PC-9 (cell line): ENCODE measurements at regions of chr11 and their contacts with region 1.

Region 1: DNA sequence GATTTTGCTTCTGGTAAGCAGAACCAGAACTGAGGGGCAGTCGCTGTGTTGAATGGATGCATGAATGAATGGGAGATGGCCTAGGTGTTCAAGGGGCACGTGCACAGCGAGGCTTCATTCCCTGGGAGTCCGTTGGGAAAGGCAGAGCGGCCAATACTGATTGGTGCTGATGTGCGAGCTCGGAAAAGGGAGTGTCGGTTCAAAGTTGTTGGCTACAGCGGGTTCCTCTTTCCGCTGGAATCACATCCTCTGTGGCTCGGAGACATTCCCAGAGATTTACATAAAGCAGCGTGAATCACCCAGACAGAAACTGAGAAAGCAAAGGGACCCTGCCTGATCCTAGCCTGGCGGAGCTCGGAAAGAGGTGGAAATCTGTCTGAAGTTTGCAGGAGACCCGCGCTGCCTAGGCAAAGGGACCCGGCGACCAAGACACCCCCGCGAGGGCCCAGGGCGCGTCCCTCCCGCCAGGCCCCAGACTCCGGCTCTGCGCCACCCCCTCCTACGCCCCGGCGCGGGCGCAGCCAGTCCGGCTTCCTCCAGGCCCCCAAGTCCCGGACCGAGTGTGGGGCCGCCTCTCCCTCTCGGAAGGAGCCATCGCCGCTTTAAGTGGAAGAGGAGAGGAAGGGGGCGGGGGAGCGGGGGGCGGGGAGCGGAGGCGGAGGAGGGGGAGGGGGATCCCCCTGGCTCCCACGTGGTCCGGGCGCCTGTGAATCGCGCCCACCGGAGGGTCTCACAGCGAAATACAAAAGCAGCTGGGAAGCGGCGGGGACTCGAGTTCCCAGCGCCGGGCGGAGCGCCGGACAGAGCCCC is at the start of gene FJX1:
- DNase-seq: peak; percentile 42 to 74
- H3K4me3 ChIP-seq: peak within 1 kb of the TSS; percentile 66
- H3K27ac ChIP-seq: peak within 1 kb of the TSS; percentile 42
- H3K4me1 ChIP-seq: peaks cover 49% of the 10 kb centered on the region
- H3K27me3 ChIP-seq: no peaks in the 10 kb centered on the region
- CTCF ChIP-seq: no peak
- total RNA-seq, gene FJX1: 14.8 and 17.5 TPM in 2 replicates

Region 2: DNA sequence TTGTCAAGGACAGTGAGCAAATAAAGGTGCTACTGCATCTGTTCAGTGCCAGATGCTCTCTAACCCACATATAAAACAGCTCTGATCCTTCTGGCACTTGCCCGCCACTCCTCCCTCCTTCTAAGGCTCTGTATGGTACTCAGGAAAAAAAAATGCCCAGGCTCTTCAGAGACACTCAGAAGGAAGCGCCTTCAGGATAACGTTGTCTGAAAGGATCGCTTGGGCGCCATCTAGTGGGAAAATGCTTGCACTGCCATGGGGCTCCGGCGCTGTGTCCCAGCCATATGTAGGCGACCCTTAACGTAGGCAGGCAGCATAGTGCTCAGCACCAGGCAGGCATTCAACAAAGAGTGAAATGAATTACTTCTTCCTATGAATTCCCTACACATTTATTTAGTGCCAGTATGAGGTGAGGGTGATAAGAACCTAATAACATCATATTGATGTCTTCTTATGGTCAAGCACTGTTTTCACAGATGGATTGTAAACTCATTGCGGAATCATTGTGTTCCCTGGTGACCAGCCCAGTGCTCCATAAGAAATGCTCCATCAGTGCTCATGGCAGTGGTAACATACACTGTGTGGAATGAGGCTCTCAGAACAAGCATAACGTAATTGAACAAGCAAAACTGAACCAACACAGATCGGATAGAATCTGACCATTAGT is 132.1 kb before region 1 on chr11:
- CTCF ChIA-PET with region 1: interaction called, 17 read pairs
- POLR2A ChIA-PET with region 1: no interaction called
- intact Hi-C with region 1: loop called (anchors 1 kb)
- DNase-seq: peak; percentile 68 to 83
- H3K4me3 ChIP-seq: no peak overlapping the region
- H3K27ac ChIP-seq: no peak overlapping the region
- H3K4me1 ChIP-seq: no peaks in the 10 kb centered on the region
- H3K27me3 ChIP-seq: no peaks in the 10 kb centered on the region
- CTCF ChIP-seq: peak; percentile 96

Region 3: DNA sequence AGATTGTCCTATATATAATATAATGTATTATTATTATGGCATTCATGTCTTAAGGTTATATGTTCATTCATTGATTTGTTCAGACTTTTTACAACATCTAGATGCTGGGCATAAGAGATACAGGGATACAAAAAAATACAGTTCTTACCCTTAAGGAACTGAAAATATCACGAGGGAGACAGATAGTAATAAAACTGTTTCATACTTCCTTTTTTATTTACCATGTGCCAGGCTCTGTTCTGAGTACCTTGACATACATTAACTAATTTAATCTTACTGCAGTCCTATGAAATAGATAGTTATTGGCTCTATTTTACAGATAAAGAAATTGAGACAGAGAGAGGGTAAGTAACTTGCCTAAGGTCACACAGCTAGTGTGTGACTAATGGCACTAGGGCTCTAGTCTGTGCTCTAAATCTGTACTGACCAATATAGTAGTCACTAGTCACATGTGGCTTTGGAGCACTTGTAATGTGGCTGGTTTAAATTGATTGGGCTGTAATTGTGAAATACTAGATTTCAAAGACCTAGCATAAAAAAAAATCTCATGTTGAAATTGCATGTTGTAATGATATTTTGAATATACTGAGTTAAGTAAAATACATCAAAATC is 65.9 kb after region 1 on chr11:
- CTCF ChIA-PET with region 1: no interaction called
- POLR2A ChIA-PET with region 1: interaction called, 12 read pairs
- intact Hi-C with region 1: no loop called
- DNase-seq: no peak
- H3K4me3 ChIP-seq: no peak overlapping the region
- H3K27ac ChIP-seq: no peak overlapping the region
- H3K4me1 ChIP-seq: no peaks in the 10 kb centered on the region
- H3K27me3 ChIP-seq: no peaks in the 10 kb centered on the region
- CTCF ChIP-seq: no peak

Region 4: DNA sequence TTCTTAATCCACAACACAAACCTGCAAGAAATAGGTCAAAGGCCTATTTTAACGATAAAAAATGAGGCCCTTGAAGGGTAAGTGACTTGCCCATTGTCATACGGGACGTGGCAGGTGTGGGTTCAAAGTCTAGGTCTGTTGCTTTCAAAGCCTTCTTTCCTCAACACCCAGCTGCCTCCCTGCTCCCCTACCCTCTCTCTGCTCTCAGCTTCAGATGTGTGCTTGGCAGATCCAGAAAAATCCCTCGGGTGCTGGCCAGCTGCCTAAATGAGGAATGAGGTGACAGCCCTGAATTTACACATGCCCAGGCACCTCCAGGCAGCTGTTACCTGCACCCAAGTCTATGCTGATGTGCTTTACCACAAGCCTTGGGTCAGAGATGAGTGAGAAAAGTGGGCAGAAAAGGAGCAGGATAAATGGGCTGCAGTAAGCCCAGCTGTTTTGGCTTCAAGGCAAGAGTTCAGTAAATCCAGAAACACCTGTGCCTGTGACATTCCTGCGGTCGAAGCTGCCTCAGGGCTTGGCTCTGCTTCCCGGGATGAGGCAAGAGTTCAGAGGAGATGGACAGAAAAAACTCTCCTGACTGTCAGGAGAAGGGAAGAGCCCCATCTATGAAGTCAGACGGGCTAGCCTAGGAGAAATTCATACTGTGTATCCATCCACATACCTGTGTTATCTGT is 276.0 kb after region 1 on chr11:
- CTCF ChIA-PET with region 1: no interaction called
- POLR2A ChIA-PET with region 1: no interaction called
- intact Hi-C with region 1: loop called (anchors 5 kb)
- DNase-seq: peak; percentile 89 to 93
- H3K4me3 ChIP-seq: no peak overlapping the region
- H3K27ac ChIP-seq: no peak overlapping the region
- H3K4me1 ChIP-seq: peaks cover 27% of the 10 kb centered on the region
- H3K27me3 ChIP-seq: no peaks in the 10 kb centered on the region
- CTCF ChIP-seq: no peak

Region 5: DNA sequence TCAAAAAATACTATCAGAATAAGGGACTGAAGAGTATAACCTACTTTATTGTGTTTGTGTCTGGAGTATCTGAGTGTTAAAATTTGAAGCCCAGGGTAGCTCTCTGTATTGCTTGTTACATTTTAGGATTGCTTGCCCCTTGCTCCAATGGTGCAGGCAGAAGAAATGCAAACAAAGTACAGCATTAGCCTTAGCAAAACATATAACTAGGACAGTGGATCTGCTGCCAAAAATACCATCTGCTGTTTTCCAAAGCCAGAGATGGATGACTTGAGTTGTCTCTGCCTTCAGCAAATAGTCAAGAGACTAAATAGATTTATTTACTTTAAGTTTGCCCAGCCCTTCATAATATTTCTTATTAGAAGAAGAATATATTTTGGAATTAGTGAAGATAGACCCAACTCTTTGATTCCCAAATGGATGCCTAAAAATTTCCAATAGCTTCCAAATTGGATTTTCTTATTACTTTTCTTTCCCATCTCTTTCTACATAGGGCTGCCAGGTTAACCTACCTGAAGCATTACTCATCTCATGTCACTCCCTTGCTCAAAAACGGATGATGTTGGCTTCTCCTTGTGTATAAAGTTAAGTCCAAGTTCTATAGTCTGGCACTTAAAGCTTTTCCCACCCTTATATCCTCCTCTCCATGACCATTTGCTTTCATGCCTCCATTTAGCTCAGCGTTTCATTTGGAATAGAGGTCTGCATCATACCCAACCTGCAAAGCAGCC is 392.3 kb after region 1 on chr11:
- CTCF ChIA-PET with region 1: no interaction called
- POLR2A ChIA-PET with region 1: no interaction called
- intact Hi-C with region 1: loop called (anchors 5 kb)
- DNase-seq: peak in 1 of 2 experiments; percentile 68
- H3K4me3 ChIP-seq: peak overlapping the region; percentile 7; the same call in 1 of the 2 replicates
- H3K27ac ChIP-seq: peak overlapping the region; percentile 68
- H3K4me1 ChIP-seq: peaks cover 51% of the 10 kb centered on the region
- H3K27me3 ChIP-seq: no peaks in the 10 kb centered on the region
- CTCF ChIP-seq: no peak

Region 6: DNA sequence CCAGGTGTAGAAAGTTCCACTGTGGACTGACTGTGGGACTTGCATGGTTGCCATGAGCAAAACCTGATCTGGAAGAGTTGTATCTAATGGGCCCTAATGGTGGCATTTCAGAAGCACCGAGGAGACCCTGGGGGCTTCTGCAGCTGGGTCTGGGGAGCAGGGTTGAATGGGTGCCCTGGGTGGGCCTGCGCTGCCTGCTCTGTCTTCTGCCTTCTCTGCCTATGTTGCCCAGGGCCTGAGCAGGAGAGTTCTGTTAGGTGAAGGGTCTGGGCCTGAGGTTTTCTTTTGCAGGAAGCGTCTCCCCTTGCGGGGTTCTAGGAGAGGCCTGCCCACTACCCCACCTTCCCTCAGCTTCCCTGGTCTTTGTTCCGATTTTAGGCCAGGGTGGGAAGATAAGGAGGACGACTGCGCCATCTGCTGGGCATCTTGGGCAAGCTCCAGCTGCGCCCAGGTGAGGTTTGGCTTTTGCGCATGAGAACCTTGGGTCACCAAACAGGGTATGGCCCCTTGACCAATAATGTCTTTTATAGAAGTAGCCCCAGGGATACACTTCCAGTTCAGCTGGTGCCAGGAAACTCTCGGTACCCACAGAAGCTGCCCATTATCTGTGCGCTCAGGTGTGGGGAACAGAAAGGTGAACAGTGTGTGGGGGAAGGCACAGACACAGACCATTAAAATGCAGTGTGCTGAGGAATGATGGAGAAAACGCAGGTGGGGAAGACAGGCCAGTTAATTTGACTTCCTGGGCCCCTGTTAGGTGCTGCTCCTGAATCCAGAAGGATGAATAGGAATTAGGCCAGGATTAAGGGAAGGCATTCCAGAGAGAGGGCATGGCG is 648.1 kb after region 1 on chr11:
- CTCF ChIA-PET with region 1: interaction called, 3 read pairs
- POLR2A ChIA-PET with region 1: no interaction called
- intact Hi-C with region 1: loop called (anchors 1 kb)
- DNase-seq: peak; percentile 46 to 63
- H3K4me3 ChIP-seq: no peak overlapping the region
- H3K27ac ChIP-seq: no peak overlapping the region
- H3K4me1 ChIP-seq: no peaks in the 10 kb centered on the region
- H3K27me3 ChIP-seq: no peaks in the 10 kb centered on the region
- CTCF ChIP-seq: peak; percentile 97